ENCODE measurements at regions of chr1 and their contacts with region 1.

Region 1: GRCh38 chr1:106515375-106515774 is 541.1 kb upstream of the PRMT6 start:
- DNase-seq: no peak
- ATAC-seq: no peak
- H3K4me3 ChIP-seq: no peak overlapping the region
- H3K4me3 Mint-ChIP-seq: no peak overlapping the region
- H3K27ac ChIP-seq: no peak overlapping the region
- H3K27ac Mint-ChIP-seq: no peak overlapping the region
- H3K4me1 ChIP-seq: no peaks in the 10 kb centered on the region
- H3K4me1 Mint-ChIP-seq: no peaks in the 10 kb centered on the region
- H3K27me3 ChIP-seq: no peaks in the 10 kb centered on the region
- H3K27me3 Mint-ChIP-seq: no peaks in the 10 kb centered on the region

Region 2: DNA sequence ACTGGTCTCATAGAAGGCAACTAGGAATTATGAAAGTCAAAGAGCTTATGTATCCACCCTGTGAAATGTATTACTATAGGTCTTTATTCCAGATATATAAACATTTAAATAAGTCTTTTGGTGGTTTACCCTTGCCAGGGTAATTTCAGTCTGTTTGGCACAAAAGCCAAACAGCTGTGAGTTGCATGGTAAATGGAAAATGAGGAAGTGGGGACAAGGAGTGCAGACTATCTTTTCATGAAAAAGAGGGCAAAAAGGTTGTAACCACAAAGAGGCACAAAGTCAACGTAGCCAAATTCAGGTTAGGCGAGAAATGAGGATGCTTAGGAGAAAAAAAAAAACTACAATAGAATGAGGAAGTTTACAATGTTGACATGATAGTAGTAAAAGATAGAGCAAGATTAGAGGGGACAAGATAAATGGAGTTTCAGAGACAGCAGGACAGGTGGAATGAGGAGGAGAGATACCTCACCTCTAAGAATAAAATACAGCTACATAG is 48.9 kb after region 1 on chr1:
- CTCF ChIA-PET with region 1: no interaction called
- POLR2A ChIA-PET with region 1: no interaction called
- intact Hi-C with region 1: loop called in 1 of 2 experiments (anchors 5 kb)
- DNase-seq: no peak
- ATAC-seq: no peak
- H3K4me3 ChIP-seq: no peak overlapping the region
- H3K4me3 Mint-ChIP-seq: no peak overlapping the region
- H3K27ac ChIP-seq: no peak overlapping the region
- H3K27ac Mint-ChIP-seq: no peak overlapping the region
- H3K4me1 ChIP-seq: no peaks in the 10 kb centered on the region
- H3K4me1 Mint-ChIP-seq: no peaks in the 10 kb centered on the region
- H3K27me3 ChIP-seq: no peaks in the 10 kb centered on the region
- H3K27me3 Mint-ChIP-seq: no peaks in the 10 kb centered on the region

Measured in naive thymus-derived CD4-positive, alpha-beta T cell (primary cell).